ENCODE measurements at regions of chr9 and their contacts with region 1.

Region 1: DNA sequence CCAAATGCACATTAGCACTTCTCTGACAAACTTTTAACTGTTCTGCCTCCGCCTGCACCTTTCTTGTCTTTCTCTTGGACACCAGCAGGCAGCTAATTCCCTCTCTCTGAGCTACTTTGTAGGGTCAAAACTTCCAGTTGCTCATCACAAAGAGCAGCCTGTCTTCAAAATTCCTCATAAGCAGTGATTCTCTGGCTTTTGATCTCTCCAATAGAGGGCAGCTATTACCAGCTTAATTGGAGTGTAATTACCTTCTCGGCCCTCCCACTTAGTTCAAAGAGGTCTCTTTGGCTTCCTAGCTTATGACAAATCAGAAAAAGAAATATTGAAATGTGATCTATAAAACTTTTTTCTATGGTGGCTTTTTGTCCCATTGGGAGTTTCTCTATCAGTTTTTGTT is 43.6 kb upstream of the RAD23B start:
- DNase-seq: peak; percentile 53
- H3K4me3 ChIP-seq: no peak overlapping the region
- H3K27ac ChIP-seq: no peak overlapping the region
- H3K4me1 ChIP-seq: no peaks in the 10 kb centered on the region
- CTCF ChIP-seq: peak; percentile 72

Region 2: DNA sequence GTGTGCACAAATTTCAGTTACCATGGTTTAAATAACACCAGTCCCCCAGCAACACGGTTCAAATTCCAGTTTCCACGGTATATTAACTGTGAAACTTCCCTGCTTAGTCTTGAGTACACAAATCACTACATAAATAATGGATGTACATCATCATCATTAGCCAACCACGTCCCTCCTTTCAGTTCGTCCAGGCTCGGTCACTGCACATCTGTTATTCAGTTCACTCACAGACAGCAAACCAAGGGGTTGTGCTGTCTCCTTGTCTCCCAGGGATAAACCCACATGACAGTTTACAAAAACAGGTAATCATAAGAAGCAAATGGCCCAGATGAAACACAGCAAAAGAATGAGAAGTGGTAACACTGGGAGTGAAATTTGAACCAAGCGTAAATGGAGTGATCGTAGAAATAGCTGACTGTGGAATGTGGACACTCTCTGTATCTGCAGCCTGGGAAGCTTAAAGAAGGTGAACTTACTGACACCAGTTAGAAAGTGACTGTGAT is 17.4 kb before region 1 on chr9:
- CTCF ChIA-PET with region 1: no interaction called
- POLR2A ChIA-PET with region 1: no interaction called
- intact Hi-C with region 1: no loop called
- DNase-seq: no peak
- H3K4me3 ChIP-seq: no peak overlapping the region
- H3K27ac ChIP-seq: no peak overlapping the region
- H3K4me1 ChIP-seq: no peaks in the 10 kb centered on the region
- CTCF ChIP-seq: no peak

Region 3: GRCh38 chr9:107340920-107341632 is 101.6 kb after region 1 on chr9:
- CTCF ChIA-PET with region 1: interaction called, 8 read pairs
- POLR2A ChIA-PET with region 1: interaction called, 6 read pairs
- intact Hi-C with region 1: loop called (anchors 1 kb)
- DNase-seq: peak; percentile 78
- H3K4me3 ChIP-seq: no peak overlapping the region
- H3K27ac ChIP-seq: no peak overlapping the region
- H3K4me1 ChIP-seq: no peaks in the 10 kb centered on the region
- CTCF ChIP-seq: peak; percentile 93

Measured in OCI-LY7 (cell line).